ENCODE measurements at regions of chr16 and their contacts with region 1.

Region 1: DNA sequence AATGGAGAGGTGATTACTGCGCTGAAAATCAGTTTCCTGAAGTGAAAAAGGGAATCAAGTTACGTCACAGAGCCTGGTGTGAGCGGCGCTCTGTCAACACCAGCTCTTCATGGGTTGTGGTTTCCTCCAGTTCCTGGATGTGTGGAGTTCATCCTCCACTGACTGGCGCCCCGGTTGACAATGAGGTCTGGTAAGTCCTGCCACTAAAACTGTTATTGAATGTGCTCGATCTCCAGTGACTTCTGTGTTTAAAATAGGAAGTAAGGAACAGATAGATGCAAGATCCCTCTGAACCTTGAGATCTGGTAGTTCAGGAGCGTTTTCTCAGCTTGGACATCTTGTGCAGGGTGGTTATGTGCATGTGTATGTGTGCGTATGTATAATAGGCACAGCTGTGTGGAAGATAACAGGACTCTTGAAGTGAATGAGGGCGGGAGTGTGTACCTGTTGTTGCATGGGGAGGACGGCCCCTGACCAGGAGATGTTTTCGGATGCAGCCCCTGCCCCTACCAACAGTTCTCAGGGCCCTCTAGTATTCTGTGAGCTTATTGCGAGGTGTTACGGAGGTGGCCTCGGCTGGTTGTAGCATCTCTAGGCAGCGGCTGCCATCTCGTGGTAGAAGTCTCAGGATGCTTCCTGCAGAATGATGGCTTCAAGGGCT is 22.0 kb upstream of the GOT2 start:
- DNase-seq: peak; percentile 59 to 90 (median 78)
- ATAC-seq: peak; percentile 97
- H3K4me3 ChIP-seq: no peak overlapping the region
- H3K4me1 ChIP-seq: no peaks in the 10 kb centered on the region
- CTCF ChIP-seq: peak; percentile 40

Region 2: GRCh38 chr16:58336332-58337089 is 419.6 kb before region 1 on chr16:
- intact Hi-C with region 1: loop called in 1 of 2 experiments (anchors 10 kb)
- DNase-seq: peak; percentile 65 to 96 (median 89)
- ATAC-seq: peak; percentile 96
- H3K4me3 ChIP-seq: no peak overlapping the region
- H3K4me1 ChIP-seq: no peaks in the 10 kb centered on the region
- CTCF ChIP-seq: peak; percentile 90

Region 3: DNA sequence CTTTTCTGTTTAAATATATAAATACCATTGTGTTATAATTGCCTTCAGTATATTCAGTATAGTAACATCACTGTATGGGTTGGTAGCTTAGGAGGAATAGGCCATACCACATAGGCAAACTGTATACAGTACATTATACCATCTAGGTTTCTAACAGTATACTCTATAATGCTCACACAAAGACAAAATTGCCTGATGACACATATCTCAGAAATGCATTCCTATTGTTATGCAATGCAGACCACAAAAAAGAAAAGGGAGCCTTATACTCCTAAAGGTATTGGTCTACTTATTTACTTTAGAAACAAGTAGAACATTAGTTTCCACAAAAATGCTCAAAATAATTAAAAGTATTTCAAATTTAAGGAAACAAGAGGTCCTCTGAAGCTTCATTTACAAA is 192.9 kb before region 1 on chr16:
- intact Hi-C with region 1: no loop called
- DNase-seq: no peak
- ATAC-seq: no peak
- H3K4me3 ChIP-seq: no peak overlapping the region
- H3K4me1 ChIP-seq: no peaks in the 10 kb centered on the region
- CTCF ChIP-seq: no peak

Region 4: DNA sequence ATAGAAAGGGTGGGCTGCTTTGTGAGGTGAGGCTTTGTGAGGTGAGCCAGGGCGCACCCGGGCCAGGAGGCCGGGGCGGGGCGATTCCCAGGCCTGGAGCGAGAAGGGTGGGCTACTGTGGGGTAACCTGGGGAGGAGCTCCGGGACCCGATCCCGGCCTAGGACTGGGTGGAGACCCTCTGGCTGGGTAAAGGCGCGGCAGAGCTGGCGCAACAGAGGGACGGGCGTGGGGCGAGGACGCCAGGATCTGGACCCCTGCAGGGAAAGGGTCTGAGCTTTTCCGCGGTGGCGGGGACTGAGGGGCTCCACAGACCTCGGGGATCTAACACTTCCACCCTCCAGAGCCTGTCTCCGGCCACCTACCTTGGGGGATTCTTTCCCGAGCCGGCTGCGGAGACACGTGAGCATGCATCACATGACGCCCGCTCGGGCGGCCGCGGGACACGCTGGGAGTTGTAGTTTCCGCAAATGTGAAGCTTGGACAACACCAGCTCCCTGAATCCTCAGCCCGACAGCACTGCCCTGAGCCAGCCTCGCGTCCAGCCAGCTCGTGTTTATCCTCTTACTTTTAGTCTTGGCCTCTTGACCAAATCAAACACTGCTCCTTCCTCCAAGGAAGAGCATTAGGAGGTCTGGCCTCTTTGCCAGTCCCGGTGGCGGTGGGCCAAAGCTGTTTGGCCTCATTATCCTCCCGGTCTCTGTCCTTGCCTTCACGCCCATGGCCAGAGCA is 71.6 kb before region 1 on chr16 and contains the start of gene SLC38A7:
- intact Hi-C with region 1: loop called in 1 of 2 experiments (anchors 10 kb)
- DNase-seq: peak; percentile 89 to 91 (median 90)
- ATAC-seq: peak; percentile 97
- H3K4me3 ChIP-seq: peak within 1 kb of the TSS; percentile 80
- H3K4me1 ChIP-seq: peaks cover 12% of the 10 kb centered on the region
- CTCF ChIP-seq: no peak
- total RNA-seq, gene SLC38A7: 9.4 to 21.9 (median 14.9) TPM